Heart right ventricle (tissue), 16 donors: ENCODE measurements at regions of chr9 and their contacts with region 1.

Region 1: DNA sequence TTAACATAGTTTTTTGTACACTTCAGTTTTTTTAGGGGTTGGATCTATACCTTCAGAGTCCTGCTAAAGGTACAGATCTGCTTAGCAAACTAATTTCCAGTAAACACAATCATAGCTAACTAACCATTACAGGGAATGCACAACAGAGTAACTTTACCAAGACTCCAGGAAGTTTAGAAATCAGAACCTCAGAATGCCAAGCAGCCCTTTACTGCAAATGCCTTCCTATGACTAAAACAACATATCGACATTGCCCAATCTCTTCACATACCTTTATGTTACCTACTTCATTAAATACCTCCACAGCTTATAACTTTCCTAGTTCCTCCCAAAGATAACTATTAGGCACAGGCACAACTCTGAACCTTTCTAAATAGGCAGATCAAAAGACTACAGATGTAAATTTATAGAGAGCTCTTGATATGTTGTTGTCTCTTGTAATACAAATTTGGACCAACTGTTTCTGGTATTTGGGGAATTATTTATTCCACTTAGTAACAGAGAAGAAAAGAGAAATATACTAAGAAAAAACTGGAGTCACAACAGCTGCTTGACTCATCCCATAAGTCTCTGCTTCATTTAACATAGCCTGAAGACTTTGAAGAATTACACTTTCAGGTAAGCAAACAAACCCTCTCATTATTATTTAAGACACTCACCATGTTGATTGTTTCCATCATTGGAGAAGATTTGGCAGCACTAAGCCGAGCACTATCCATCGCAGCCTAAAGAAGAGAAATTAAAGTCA is 46.0 kb upstream of the OR2K2 start:
- DNase-seq: no peak
- ATAC-seq: no peak
- H3K4me3 ChIP-seq: no peak overlapping the region
- H3K27ac ChIP-seq: no peak overlapping the region
- H3K4me1 ChIP-seq: no peaks in the 10 kb centered on the region
- H3K27me3 ChIP-seq: no peaks in the 10 kb centered on the region
- CTCF ChIP-seq: no peak

Region 2: GRCh38 chr9:111427186-111427585 is 51.2 kb after region 1 on chr9:
- intact Hi-C with region 1: loop called in 1 of 10 experiments (anchors 10 kb)
- DNase-seq: no peak
- ATAC-seq: peak in 1 of 8 donors; percentile 44
- H3K4me3 ChIP-seq: no peak overlapping the region
- H3K27ac ChIP-seq: no peak overlapping the region
- H3K4me1 ChIP-seq: peaks cover 0 to 6% (median 0%) of the 10 kb centered on the region in 9 donors
- H3K27me3 ChIP-seq: no peaks in the 10 kb centered on the region
- CTCF ChIP-seq: no peak

Region 3: GRCh38 chr9:111456529-111456928 is 80.5 kb after region 1 on chr9:
- intact Hi-C with region 1: no loop called
- DNase-seq: no peak
- ATAC-seq: peak in 6 of 8 donors; percentile 36 to 76 (median 66)
- H3K4me3 ChIP-seq: no peak overlapping the region
- H3K27ac ChIP-seq: peak overlapping the region in 3 of 10 donors; percentile 9 to 36 (median 19)
- H3K4me1 ChIP-seq: peaks cover 3 to 71% (median 49%) of the 10 kb centered on the region in 9 donors
- H3K27me3 ChIP-seq: no peaks in the 10 kb centered on the region
- CTCF ChIP-seq: peak in 1 of 9 donors; percentile 8

Region 4: DNA sequence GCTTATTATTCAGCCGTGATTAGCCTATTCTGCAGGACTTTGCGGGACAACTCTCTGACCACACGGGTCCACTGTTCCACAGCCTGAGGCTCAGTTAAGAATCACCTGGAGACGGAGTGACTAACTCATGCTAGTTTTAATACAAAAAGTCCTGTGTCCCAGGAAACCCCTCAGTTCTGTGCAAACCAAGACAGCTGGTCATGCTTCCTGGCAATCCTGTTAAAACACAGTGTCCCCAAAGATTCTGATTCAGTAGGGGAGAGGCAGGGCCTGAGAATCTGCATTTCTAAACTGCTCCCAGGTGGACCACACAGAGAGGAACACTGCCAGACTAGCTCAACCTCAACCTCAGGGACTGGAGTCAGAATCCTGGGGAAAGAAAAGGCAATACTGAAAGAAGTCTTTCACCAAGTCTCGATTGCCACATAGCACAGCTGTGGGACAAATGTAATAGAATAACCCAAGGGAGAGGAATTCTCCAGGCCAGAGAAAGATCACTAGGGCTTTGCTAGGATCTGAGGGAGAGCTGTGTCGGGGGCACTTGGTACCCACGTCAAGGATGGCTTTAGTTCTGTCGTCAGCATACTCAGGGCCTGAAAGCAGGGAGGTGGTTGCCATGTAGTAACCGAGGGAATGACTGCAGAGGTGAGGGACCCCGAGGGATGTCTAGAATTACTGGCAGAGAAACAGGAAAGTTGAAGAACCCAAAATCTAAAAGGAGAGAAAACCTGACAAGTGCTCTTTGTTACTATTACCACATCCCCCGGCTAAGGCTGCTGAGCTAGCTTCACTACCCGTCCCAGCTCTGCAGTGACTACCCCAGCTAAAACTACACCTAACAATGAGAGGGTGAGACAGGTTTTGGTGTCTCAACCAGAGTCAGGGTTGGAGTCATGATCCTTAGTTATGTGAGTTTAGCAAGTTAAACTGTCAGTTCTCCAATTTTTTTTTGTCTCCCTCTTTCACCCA is 790.5 kb after region 1 on chr9:
- intact Hi-C with region 1: no loop called
- DNase-seq: no peak
- ATAC-seq: peak; percentile 60 to 92 (median 74)
- H3K4me3 ChIP-seq: no peak overlapping the region
- H3K27ac ChIP-seq: peak overlapping the region in 3 of 10 donors; percentile 26 to 41 (median 26)
- H3K4me1 ChIP-seq: peaks cover 0 to 37% (median 0%) of the 10 kb centered on the region in 9 donors
- H3K27me3 ChIP-seq: no peaks in the 10 kb centered on the region
- CTCF ChIP-seq: peak in 3 of 9 donors; percentile 20 to 37 (median 33)